ENCODE measurements at regions of chr13 and their contacts with region 1.

Region 1: DNA sequence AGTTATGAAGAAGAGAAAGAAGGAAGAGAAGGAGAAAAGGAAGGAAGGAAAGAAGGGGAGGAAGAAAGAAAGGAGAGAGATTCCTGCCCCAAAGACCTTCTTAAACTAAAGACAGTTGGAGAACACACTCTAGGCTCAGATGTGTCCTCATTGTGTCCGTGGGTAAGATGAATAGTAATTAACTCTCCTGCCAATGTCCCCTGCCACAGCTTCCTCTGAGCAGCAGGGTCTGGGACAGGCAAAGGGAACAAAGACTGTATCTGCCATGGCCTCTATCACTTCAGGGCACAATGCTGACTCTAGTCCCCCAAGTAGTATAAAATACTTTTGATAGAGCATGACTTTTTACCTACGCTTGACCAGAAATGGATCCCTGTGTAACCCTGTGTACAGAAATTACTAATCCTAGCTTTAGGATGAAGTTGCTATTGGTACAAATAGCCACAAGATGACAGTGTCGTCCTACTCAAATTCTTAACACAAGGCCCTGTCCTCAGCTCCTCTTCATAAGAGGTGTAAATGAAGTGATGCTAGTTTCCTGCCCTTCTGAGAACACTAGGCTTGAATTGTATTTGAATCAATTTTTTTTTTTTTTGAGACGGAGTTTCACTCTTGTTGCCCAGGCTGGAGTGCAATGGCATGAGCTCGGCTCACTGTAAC is 186.2 kb upstream of the GPR12 start:
- DNase-seq: no peak
- H3K4me3 ChIP-seq: no peak overlapping the region
- CTCF ChIP-seq: peak; percentile 57

Region 2: DNA sequence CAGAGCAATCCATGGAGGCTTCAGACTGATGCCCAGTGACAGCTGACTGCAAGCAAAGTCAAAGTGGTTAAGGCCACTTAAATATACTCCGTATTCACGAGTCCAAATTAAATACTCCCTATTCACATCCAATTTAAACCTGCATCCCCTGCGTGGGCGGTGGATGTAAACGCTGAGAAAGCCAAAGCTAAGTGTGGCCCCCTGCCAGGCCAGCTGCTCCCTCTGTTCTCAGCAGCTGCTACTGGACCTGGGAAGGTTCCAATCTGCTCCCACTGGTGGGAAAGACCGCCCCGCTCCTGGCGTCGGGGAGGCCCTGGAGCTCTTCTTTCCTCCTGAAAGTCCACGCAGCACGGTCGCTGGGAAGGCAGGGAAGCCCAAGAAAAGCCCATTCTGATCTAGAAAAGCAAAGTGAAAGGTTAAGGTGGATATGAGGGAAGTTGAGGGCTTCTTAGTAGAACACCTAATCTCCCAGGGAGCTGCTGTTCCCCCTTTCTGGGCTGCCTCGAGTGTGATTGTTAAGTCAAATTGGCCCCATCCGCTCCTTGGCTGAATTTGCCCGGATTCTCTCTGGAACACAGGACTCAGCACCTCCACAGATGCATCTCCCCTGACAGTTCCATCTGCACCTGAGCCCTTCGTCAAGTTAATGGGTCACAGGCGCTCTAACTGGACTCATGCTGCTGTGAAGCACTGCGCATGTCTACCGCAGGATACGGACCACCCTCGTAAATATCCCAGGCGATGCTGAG is 19.3 kb after region 1 on chr13:
- CTCF ChIA-PET with region 1: interaction called, 22 read pairs
- POLR2A ChIA-PET with region 1: no interaction called
- DNase-seq: no peak
- H3K4me3 ChIP-seq: no peak overlapping the region
- CTCF ChIP-seq: no peak

Region 3: DNA sequence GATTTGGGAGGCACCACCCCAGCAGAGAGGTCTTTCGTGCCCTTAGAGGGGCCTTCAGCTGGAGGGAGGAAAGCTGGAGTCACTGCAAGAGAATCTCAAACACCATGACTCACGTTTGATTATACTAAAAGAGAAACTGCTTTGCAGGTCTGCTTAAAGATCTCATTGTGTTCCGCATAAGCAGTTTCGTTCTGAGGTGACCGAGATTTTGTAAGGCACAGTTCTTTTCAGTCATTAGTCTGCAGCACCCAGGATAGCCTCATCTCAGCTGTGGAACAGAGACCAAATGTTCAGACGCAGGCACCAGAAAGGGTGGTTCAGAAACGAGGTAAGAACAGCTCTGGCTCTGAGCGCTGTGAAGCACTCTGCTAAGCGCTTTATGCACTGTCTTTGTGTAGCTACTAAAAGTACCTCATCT is 406.4 kb after region 1 on chr13:
- CTCF ChIA-PET with region 1: interaction called, 228 read pairs
- POLR2A ChIA-PET with region 1: no interaction called
- DNase-seq: no peak
- H3K4me3 ChIP-seq: no peak overlapping the region; the same call in 1 of the 2 replicates
- CTCF ChIP-seq: no peak

Region 4: DNA sequence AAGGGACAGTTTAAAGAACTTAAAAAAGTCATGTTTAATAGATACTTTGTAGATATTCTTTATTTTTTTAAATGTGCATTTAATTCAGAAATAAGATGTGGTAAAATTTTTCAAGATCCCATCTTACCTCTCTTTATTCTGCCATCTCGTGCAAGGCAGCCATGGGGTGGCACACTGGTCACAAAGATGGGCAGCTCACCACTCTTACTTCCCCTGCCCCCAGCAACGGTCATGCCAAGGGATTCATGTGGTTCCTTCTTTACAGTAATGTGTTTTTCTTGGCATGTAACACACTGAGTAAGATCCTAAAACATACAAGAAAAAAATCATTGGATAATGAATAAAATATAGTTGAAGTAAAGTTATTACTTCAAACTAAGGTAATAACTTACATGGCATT is 609.3 kb after region 1 on chr13:
- CTCF ChIA-PET with region 1: no interaction called
- POLR2A ChIA-PET with region 1: no interaction called
- DNase-seq: peak; percentile 37
- H3K4me3 ChIP-seq: no peak overlapping the region
- CTCF ChIP-seq: peak; percentile 25